Activated B cell treated with CpG ODN at 0.5 μM for 24 hours (primary cell): ENCODE measurements at regions of chr2 and their contacts with region 1.

Region 1: DNA sequence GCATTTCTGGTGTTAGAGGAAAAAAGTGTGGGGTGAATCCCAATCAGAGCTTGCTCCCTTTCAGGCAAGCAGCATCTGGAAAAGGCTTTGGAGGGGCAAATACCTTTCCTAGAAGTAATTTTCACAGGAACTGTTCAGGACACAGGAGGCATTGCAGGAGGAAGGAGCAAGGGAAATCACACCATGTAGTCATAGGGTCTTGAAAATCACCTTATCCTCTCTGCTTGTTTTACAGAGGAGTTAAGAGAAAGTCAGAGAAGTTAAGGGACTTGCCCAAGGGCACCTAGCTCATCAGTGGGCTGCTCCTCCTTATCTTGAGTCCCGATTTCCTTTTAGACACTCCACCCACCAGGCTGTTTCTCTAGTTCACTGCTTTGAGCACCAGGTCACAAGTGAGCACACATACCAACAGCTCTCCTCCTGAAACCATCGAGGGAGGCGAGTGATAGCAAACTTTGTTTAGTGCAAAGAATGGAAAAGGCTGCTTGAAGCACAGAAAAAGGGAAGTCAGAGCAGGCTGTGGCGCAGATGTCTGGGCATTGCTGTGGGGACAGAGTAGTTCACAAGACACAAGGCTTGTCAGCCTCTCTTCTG is 89.2 kb upstream of the CXCR4 start:
- DNase-seq: peak; percentile 57
- ATAC-seq: peak; percentile 66
- H3K4me3 Mint-ChIP-seq: peak overlapping the region; percentile 71
- H3K27ac Mint-ChIP-seq: peak overlapping the region; percentile 97
- H3K4me1 Mint-ChIP-seq: peaks cover 78% of the 10 kb centered on the region
- H3K27me3 Mint-ChIP-seq: no peaks in the 10 kb centered on the region
- CTCF ChIP-seq: no peak

Region 2: GRCh38 chr2:135997380-135997779 is 209.7 kb before region 1 on chr2:
- CTCF ChIA-PET with region 1: interaction called, 17 read pairs
- POLR2A ChIA-PET with region 1: interaction called, 19 read pairs
- intact Hi-C with region 1: loop called (anchors 5 kb)
- DNase-seq: peak; percentile 41
- ATAC-seq: peak; percentile 97
- H3K4me3 Mint-ChIP-seq: peak overlapping the region; percentile 24
- H3K27ac Mint-ChIP-seq: peak overlapping the region; percentile 86
- H3K4me1 Mint-ChIP-seq: peaks cover 51% of the 10 kb centered on the region
- H3K27me3 Mint-ChIP-seq: no peaks in the 10 kb centered on the region
- CTCF ChIP-seq: no peak

Region 3: DNA sequence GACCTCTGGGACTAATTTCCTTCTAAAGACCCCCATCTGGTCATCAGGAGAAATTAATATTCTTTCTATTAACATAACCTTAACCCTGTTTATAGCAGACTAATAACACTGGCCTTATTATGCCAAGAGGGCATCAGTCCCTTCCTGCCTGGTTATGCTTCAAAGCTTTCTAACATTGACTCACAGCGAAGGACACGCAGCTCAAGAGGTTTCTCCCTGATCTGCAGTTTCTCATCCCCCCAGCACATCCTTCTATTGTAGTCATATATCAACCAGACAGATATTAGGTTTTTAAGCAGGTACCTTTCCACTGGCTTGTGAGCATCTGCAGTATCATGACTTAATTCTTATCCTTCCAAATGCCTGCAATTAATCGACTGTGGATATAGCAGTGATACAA is 10.9 kb after region 1 on chr2:
- CTCF ChIA-PET with region 1: interaction called, 11 read pairs
- POLR2A ChIA-PET with region 1: interaction called, 46 read pairs
- intact Hi-C with region 1: loop called (anchors 1 kb)
- DNase-seq: no peak
- ATAC-seq: peak; percentile 59
- H3K4me3 Mint-ChIP-seq: no peak overlapping the region
- H3K27ac Mint-ChIP-seq: peak overlapping the region; percentile 75
- H3K4me1 Mint-ChIP-seq: peaks cover 96% of the 10 kb centered on the region
- H3K27me3 Mint-ChIP-seq: no peaks in the 10 kb centered on the region
- CTCF ChIP-seq: no peak

Region 4: GRCh38 chr2:136246086-136246669 is 39.1 kb after region 1 on chr2:
- CTCF ChIA-PET with region 1: interaction called, 3 read pairs
- POLR2A ChIA-PET with region 1: interaction called, 52 read pairs
- intact Hi-C with region 1: no loop called
- DNase-seq: no peak
- ATAC-seq: peak; percentile 86
- H3K4me3 Mint-ChIP-seq: peak overlapping the region; percentile 35
- H3K27ac Mint-ChIP-seq: peak overlapping the region; percentile 76
- H3K4me1 Mint-ChIP-seq: peaks cover 65% of the 10 kb centered on the region
- H3K27me3 Mint-ChIP-seq: no peaks in the 10 kb centered on the region
- CTCF ChIP-seq: no peak

Region 5: GRCh38 chr2:136362676-136363390 is 155.7 kb after region 1 on chr2:
- CTCF ChIA-PET with region 1: no interaction called
- POLR2A ChIA-PET with region 1: interaction called, 3 read pairs
- intact Hi-C with region 1: loop called (anchors 5 kb)
- DNase-seq: no peak
- ATAC-seq: peak; percentile 92
- H3K4me3 Mint-ChIP-seq: no peak overlapping the region
- H3K27ac Mint-ChIP-seq: peak overlapping the region; percentile 2
- H3K4me1 Mint-ChIP-seq: peaks cover 23% of the 10 kb centered on the region
- H3K27me3 Mint-ChIP-seq: no peaks in the 10 kb centered on the region
- CTCF ChIP-seq: no peak